Activated naive CD4-positive, alpha-beta T cell treated with anti-CD3 and anti-CD28 coated beads for 36 hours (primary cell): ENCODE measurements at regions of chr2 and their contacts with region 1.

Region 1: DNA sequence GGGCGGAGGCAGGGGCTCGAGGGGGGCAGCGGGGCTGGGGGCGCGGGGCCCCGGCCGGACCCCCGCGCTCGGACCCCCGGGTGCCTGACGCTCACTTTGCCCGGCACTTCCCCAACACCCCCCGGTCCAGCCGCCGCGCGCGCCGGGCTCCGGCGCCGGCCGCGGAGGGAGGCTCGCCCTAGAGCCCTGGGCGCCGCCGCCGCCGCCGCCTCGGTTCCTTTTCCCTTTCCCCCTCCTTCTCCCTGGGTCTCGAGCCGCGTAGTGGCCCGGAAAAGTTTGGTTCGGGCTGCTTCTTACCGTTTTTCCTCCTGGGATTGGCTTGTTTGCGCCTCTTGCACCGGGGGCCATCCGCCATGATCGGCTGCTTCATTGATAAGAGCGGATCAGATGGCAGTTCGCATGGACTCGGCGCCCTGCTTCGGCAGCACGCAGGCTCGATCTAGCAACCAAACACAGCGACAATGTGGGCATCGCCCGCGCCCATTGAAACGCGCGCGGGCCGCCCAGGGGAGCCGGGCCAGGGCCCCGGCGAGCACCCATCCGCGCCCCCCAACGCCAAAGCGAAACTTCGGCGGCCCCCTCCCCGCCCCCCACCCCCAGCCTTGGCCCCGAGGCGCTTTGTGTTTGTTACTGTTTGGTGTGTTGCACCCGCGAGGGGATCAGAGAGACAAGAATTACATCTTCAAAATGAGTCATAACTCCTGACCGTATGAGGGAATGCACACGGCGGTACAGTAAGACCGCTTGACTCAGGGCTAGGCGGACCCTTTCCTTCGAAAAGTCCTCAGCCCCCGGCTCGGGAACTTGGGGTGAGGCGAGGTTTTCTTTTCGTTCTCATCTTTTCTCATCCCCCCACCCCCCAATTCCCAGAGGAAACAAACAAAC is 2.7 kb downstream of the ZEB2 start:
- DNase-seq: peak; percentile 63
- H3K4me3 Mint-ChIP-seq: no peak overlapping the region
- H3K27ac Mint-ChIP-seq: peak overlapping the region; percentile 88
- H3K4me1 Mint-ChIP-seq: peaks cover 15% of the 10 kb centered on the region
- H3K27me3 Mint-ChIP-seq: peaks cover 50% of the 10 kb centered on the region

Region 2: DNA sequence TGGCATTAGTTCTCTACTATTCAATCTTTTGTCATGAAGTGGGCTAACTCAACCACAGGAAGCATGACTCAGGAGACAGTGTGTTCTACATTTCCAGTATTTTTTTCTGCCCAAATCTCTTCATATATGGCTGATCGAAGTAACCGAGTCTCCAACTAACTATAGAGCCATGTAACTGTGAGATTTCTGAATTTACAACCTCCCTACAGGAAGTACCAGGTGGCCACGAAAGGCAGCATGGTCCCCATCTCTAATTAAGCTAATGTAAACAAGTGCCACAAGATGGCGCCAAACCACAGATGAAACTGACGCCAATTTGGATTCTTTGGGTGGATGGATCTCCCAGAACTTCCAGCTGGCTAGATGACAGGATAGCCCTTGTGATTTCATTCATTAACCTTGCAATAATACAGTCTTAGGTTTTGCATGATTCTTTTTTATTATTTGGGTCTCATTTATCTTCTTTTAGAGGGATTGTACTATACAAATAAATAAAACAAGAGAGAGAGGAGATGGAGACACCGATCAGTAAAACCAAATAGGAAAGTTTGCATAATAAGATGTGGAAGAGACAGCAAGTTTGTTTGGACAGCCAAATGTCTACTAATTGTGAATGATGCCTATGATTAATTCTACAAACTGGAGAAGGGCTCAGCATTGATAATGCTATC is 1406.3 kb before region 1 on chr2:
- CTCF ChIA-PET with region 1: no interaction called
- intact Hi-C with region 1: loop called (anchors 5 kb)
- DNase-seq: peak; percentile 82
- H3K4me3 Mint-ChIP-seq: peak overlapping the region; percentile 59
- H3K27ac Mint-ChIP-seq: peak overlapping the region; percentile 90
- H3K4me1 Mint-ChIP-seq: peaks cover 46% of the 10 kb centered on the region
- H3K27me3 Mint-ChIP-seq: no peaks in the 10 kb centered on the region

Region 3: DNA sequence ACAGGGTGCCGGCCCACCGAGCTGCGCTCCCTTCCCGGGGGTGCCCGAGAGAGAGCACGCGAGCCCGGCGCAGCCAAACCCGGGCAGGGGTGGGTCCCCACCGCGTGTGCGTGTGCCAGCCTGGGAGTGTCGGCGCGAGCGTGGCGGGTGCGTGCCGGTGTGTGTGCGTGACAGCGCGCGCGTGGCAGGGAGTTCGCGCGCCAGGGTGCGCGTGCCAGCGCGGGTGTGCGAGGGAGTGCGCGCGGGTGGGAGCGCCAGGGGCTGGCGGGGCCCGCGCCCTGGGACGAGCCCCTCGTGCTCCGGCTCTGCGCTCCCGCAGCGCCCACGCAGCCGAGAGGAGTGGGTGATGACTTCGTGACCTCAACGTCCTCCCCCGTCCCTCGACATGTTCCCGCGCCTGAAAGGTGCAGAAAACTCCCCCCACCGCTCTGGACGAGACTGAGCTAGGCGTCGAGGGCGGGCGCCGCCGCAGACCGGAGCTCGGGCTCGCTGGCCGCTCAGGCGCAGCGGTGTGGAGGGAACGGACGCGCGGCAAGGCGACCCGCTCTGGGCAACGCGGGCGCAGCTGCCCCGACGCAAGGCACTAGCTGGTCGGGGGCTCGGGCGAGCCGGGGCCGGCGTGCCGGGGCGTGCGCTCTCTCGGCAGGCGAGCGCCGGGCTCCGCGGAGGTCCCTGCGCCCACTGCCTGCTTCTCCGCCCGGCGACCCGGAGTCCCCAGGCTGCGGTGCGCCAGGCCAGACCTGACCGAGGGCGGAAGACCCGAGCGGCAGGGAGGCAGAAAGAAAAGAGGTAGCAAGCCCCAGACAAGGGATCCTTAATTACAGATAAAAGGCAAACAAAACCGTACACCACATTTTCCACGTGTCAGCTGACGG is 580.1 kb before region 1 on chr2:
- CTCF ChIA-PET with region 1: no interaction called
- intact Hi-C with region 1: loop called (anchors 5 kb)
- DNase-seq: peak; percentile 28
- H3K4me3 Mint-ChIP-seq: peak overlapping the region; percentile 46
- H3K27ac Mint-ChIP-seq: no peak overlapping the region
- H3K4me1 Mint-ChIP-seq: peaks cover 7% of the 10 kb centered on the region
- H3K27me3 Mint-ChIP-seq: peaks cover 49% of the 10 kb centered on the region

Region 4: GRCh38 chr2:144183727-144184126 is 333.5 kb before region 1 on chr2:
- CTCF ChIA-PET with region 1: no interaction called
- intact Hi-C with region 1: loop called (anchors 1 kb)
- DNase-seq: peak; percentile 89
- H3K4me3 Mint-ChIP-seq: peak overlapping the region; percentile 52
- H3K27ac Mint-ChIP-seq: peak overlapping the region; percentile 81
- H3K4me1 Mint-ChIP-seq: peaks cover 42% of the 10 kb centered on the region
- H3K27me3 Mint-ChIP-seq: no peaks in the 10 kb centered on the region

Region 5: DNA sequence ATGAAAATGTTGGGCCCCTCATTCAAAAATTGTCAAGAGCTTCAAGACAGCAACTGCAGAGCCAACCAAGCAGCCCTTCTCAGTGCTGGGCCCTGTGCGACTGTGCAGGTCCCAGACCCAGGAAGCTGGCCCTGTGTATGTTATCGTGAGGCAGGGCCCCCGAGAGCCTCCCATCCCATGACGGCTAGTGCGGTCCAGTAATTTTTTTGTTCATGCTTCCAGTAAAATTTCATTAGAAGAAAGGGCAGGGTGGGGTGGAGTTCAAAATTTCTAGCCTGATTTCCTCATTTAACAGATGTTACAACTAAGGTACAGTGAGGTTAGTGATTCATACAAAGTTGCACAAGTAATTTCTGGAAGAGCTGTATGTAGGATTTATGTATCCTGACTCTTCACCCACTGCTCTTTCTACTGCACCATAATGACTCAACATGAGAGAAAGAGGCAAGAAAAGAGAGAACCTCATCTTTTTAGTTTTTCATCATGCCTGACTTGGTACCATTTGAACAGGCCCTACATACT is 102.8 kb before region 1 on chr2:
- CTCF ChIA-PET with region 1: no interaction called
- intact Hi-C with region 1: loop called (anchors 1 kb)
- DNase-seq: peak; percentile 10
- H3K4me3 Mint-ChIP-seq: no peak overlapping the region
- H3K27ac Mint-ChIP-seq: no peak overlapping the region
- H3K4me1 Mint-ChIP-seq: peaks cover 17% of the 10 kb centered on the region
- H3K27me3 Mint-ChIP-seq: peaks cover 5% of the 10 kb centered on the region

Region 6: DNA sequence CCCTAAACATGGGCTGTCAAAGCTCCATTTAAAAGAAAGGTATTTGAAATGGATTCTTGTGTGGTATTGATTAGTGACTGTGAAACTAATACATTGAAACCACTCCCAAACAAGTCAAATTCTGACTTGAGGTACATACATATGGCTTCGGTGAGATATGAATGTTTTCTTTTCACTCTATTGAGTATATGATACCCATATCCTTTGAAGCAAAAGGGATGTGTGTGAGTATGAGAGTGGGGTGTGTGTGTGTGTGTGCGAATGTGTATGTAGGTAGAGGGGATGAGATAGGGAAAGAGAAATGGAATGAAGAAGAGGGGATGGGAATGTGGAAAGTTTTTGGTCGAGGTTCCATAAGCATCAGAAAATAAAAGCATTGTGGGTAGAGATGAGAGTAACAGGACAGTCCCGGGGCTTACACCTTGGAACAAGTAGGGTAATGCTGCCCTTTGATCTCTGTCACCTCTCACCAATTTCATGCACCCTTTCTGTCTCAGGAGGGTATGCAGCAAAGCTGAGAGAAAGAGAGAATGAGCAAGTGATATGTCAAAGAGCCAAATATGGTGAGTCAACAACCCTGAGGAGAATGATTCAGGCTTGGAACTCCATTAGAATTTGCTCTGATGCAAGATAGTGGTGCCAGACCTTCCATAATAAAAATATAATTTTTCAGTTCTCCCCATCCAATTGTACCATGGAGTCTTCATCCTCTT is 66.7 kb after region 1 on chr2:
- CTCF ChIA-PET with region 1: no interaction called
- intact Hi-C with region 1: loop called (anchors 2 kb)
- DNase-seq: peak; percentile 6
- H3K4me3 Mint-ChIP-seq: no peak overlapping the region
- H3K27ac Mint-ChIP-seq: no peak overlapping the region
- H3K4me1 Mint-ChIP-seq: peaks cover 20% of the 10 kb centered on the region
- H3K27me3 Mint-ChIP-seq: peaks cover 10% of the 10 kb centered on the region

Region 7: DNA sequence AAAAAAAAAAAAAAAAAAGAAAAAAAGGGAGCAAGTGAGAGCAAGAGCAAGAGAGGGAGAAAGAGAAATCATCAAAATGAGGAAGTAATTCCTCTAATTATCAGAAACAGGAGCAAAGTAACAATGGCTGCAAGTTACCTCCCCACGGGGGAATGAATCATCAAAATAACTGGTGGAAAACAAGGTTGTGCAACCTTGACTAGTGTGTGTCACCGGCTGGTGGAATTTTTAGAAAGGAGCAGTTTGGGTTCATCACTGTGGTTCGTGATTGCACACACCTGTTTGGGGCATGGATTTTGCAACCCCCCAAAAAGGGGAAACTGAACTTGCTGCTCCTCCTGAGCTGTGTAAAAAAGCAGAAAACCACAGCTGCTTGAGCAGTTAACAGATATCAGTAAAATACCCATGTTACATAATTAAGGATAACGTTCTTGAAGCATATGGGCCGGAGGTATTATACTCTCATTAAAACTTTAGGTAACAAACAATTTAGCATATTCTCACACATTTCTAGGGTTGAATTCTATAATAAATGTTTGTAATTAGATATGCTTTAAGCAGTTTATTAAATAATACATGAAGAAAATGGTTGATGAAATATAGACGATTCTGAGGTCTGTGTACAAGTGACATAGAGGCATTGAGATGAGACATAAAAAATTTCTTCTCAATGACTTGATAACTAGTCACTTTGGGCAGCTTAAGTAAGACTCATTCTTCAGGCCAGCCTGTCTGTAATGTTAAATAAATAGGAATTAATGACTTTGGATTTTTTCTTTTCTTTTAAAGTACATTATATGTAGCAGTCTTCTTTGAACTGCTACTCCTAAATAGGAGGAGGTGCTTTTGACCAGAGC is 186.9 kb after region 1 on chr2:
- CTCF ChIA-PET with region 1: no interaction called
- intact Hi-C with region 1: no loop called
- DNase-seq: peak; percentile 4
- H3K4me3 Mint-ChIP-seq: no peak overlapping the region
- H3K27ac Mint-ChIP-seq: no peak overlapping the region
- H3K4me1 Mint-ChIP-seq: peaks cover 1% of the 10 kb centered on the region
- H3K27me3 Mint-ChIP-seq: peaks cover 6% of the 10 kb centered on the region